ENCODE measurements at regions of chr6 and their contacts with region 1.

Region 1: DNA sequence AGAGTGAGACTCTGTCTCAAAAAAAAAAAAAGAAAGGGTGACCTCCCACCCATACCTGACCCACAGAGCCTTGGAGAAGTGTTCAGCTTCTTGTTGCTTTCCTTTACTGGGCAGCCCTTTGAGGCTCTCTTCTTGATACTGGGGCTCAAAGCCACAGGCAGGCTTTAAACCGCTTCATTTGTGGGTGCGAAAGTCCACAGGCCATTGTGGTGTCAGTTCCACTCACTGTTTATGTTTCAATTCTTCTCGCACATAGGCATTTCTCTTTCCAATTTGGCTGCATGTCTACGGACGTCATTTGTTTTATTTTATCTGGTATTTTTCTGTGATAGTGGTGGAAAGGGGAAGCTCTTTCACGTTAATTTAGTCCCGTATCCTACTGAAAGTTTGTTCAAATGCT is 34.6 kb downstream of the PPARD start:
- DNase-seq: no peak
- ATAC-seq: no peak
- H3K4me3 ChIP-seq: no peak overlapping the region
- H3K27ac ChIP-seq: no peak overlapping the region
- H3K4me1 ChIP-seq: no peaks in the 10 kb centered on the region
- H3K27me3 ChIP-seq: no peaks in the 10 kb centered on the region
- CTCF ChIP-seq: no peak

Region 2: DNA sequence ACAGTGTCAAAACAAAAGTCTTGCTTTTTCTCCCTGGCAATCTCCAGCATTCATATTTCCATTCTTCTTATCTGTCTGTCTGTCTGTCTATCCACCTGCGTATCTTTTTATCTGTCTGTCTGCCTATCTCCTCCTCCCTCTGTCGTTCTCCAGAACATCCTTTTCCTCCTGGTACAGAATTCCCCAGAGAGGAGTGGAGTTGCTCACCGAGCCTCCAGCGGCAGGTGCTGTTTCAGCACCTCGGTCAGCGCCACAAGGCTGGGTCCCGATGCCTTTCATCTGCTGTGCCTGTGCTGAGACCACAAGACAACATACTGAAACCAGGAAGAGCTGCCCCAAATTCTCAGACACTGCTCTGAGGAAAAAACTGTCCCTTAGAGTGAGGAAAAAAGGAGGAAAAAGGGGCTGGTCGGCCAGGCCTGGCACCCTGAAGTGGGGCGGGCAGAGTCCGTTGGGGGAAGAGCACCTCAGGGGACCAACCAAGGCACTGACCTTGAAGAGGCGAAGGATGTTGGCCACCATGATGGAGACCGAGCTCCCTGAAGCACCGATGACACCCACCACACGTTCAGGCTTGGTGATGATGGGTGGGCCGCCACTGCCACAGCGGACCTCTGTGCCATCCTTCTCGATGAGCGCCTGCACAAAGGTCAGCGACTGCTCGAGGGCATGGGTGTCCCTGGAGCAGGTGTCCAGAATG is 1244.4 kb before region 1 on chr6:
- CTCF ChIA-PET with region 1: no interaction called
- POLR2A ChIA-PET with region 1: no interaction called
- in situ Hi-C with region 1: no loop called
- intact Hi-C with region 1: no loop called
- DNase-seq: no peak
- ATAC-seq: no peak
- H3K4me3 ChIP-seq: no peak overlapping the region
- H3K27ac ChIP-seq: no peak overlapping the region
- H3K4me1 ChIP-seq: no peaks in the 10 kb centered on the region
- H3K27me3 ChIP-seq: no peaks in the 10 kb centered on the region
- CTCF ChIP-seq: no peak

Region 3: GRCh38 chr6:35463292-35463691 is 86.3 kb after region 1 on chr6:
- CTCF ChIA-PET with region 1: no interaction called
- POLR2A ChIA-PET with region 1: interaction called, 13 read pairs
- in situ Hi-C with region 1: no loop called
- intact Hi-C with region 1: no loop called
- DNase-seq: no peak
- ATAC-seq: no peak
- H3K4me3 ChIP-seq: no peak overlapping the region
- H3K27ac ChIP-seq: no peak overlapping the region
- H3K4me1 ChIP-seq: peaks cover 6% of the 10 kb centered on the region; the same call in 1 of the 2 replicates
- H3K27me3 ChIP-seq: no peaks in the 10 kb centered on the region
- CTCF ChIP-seq: no peak